AG04450 (cell line): ENCODE measurements at regions of chr11 and their contacts with region 1.

Region 1: GRCh38 chr11:7977232-7977917 is 9.8 kb upstream of the EIF3F start:
- DNase-seq: peak; percentile 77
- H3K4me3 ChIP-seq: no peak overlapping the region; the same call in 1 of the 2 replicates
- H3K27ac ChIP-seq: peak overlapping the region; percentile 82
- H3K27me3 ChIP-seq: no peaks in the 10 kb centered on the region
- CTCF ChIP-seq: no peak

Region 2: GRCh38 chr11:7904914-7905313 is 72.5 kb before region 1 on chr11:
- CTCF ChIA-PET with region 1: interaction called, 16 read pairs
- POLR2A ChIA-PET with region 1: interaction called, 3 read pairs
- DNase-seq: peak; percentile 37
- H3K4me3 ChIP-seq: no peak overlapping the region
- H3K27ac ChIP-seq: peak overlapping the region; percentile 31
- H3K27me3 ChIP-seq: no peaks in the 10 kb centered on the region
- CTCF ChIP-seq: peak; percentile 61

Region 3: GRCh38 chr11:7965386-7965785 is 12.0 kb before region 1 on chr11 and contains the start of gene NLRP10:
- CTCF ChIA-PET with region 1: no interaction called
- POLR2A ChIA-PET with region 1: interaction called, 24 read pairs
- DNase-seq: peak; percentile 67
- H3K4me3 ChIP-seq: peak within 1 kb of the TSS; percentile 17; the same call in 1 of the 2 replicates
- H3K27ac ChIP-seq: peak within 1 kb of the TSS; percentile 98
- H3K27me3 ChIP-seq: no peaks in the 10 kb centered on the region
- CTCF ChIP-seq: no peak
- polyA plus RNA-seq, gene NLRP10: 2.4 and 2.8 TPM in 2 replicates